ENCODE measurements at regions of chr1 and their contacts with region 1.

Region 1: GRCh38 chr1:226308723-226309315 is at the start of gene LIN9:
- DNase-seq: peak; percentile 73 to 93 (median 88)
- ATAC-seq: peak; percentile 89 to 95 (median 90)
- H3K4me3 ChIP-seq: peak within 1 kb of the TSS; percentile 89 to 100
- H3K4me3 Mint-ChIP-seq: peak within 1 kb of the TSS; percentile 86 to 89 (median 88)
- H3K27ac ChIP-seq: peak within 1 kb of the TSS; percentile 32
- H3K27ac Mint-ChIP-seq: peak within 1 kb of the TSS in 1 of 2 donors; percentile 80
- H3K4me1 ChIP-seq: peaks cover 11 to 14% of the 10 kb centered on the region in 2 experiments
- H3K4me1 Mint-ChIP-seq: peaks cover 18 to 27% (median 22%) of the 10 kb centered on the region in 3 donors
- H3K27me3 ChIP-seq: peaks cover 0 to 5% of the 10 kb centered on the region in 2 experiments
- H3K27me3 Mint-ChIP-seq: peaks cover 0 to 14% of the 10 kb centered on the region in 2 donors
- total RNA-seq, gene LIN9: 1.6 to 7.3 (median 5.3) TPM

Region 2: DNA sequence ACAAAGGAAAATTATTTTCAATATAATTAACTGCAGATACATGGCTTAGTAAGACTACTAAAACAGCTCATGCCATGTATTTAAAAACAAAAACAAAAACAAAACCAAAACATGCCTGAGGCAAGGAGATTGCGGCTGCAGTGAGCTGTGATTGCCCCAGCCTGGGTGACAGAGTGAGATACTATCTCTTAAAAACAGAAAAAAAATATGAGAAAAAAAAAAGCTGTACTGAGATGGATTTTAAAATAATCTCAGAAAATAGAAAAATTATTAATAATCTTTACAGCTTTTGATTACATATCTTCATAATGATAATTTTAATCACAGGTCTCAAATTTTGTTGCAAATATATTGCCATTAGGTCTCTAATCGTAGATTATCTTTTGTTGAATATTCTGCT is 24.1 kb after region 1 on chr1:
- CTCF ChIA-PET with region 1: interaction called in 1 of 2 experiments, 14 read pairs
- POLR2A ChIA-PET with region 1: no interaction called
- DNase-seq: peak in 2 of 35 experiments; percentile 3 to 18
- ATAC-seq: peak in 2 of 4 experiments; percentile 32 to 47
- H3K4me3 ChIP-seq: no peak overlapping the region
- H3K4me3 Mint-ChIP-seq: peak overlapping the region; percentile 11 to 45 (median 34)
- H3K27ac ChIP-seq: no peak overlapping the region
- H3K27ac Mint-ChIP-seq: no peak overlapping the region
- H3K4me1 ChIP-seq: peaks cover 0 to 2% of the 10 kb centered on the region in 2 experiments
- H3K4me1 Mint-ChIP-seq: peaks cover 0 to 8% (median 6%) of the 10 kb centered on the region in 3 donors
- H3K27me3 ChIP-seq: no peaks in the 10 kb centered on the region
- H3K27me3 Mint-ChIP-seq: no peaks in the 10 kb centered on the region

Region 3: GRCh38 chr1:226772446-226773139 is 463.8 kb after region 1 on chr1:
- CTCF ChIA-PET with region 1: no interaction called
- POLR2A ChIA-PET with region 1: no interaction called
- DNase-seq: no peak
- ATAC-seq: no peak
- H3K4me3 ChIP-seq: no peak overlapping the region
- H3K4me3 Mint-ChIP-seq: no peak overlapping the region
- H3K27ac ChIP-seq: no peak overlapping the region
- H3K27ac Mint-ChIP-seq: no peak overlapping the region
- H3K4me1 ChIP-seq: no peaks in the 10 kb centered on the region
- H3K4me1 Mint-ChIP-seq: no peaks in the 10 kb centered on the region
- H3K27me3 ChIP-seq: no peaks in the 10 kb centered on the region
- H3K27me3 Mint-ChIP-seq: no peaks in the 10 kb centered on the region

Measured in T-cell (primary cell).